ENCODE measurements at regions of chr3 and their contacts with region 1.

Region 1: GRCh38 chr3:42071904-42072592 is 19.1 kb upstream of the TRAK1 start:
- DNase-seq: peak; percentile 98
- H3K4me3 ChIP-seq: peak overlapping the region in 1 of 3 experiments; percentile 20
- H3K27ac ChIP-seq: peak overlapping the region; percentile 67
- H3K4me1 ChIP-seq: peaks cover 26% of the 10 kb centered on the region
- H3K27me3 ChIP-seq: no peaks in the 10 kb centered on the region
- CTCF ChIP-seq: no peak
- POLR2A ChIP-seq: no peak

Region 2: GRCh38 chr3:42025370-42026138 is 46.5 kb before region 1 on chr3:
- CTCF ChIA-PET with region 1: interaction called, 14 read pairs
- POLR2A ChIA-PET with region 1: interaction called, 8 read pairs
- dilution Hi-C with region 1: no loop called
- intact Hi-C with region 1: loop called (anchors 1 kb)
- DNase-seq: peak; percentile 98
- H3K4me3 ChIP-seq: peak overlapping the region in 1 of 3 experiments; percentile 46
- H3K27ac ChIP-seq: peak overlapping the region; percentile 93
- H3K4me1 ChIP-seq: peaks cover 40% of the 10 kb centered on the region
- H3K27me3 ChIP-seq: no peaks in the 10 kb centered on the region
- CTCF ChIP-seq: no peak
- POLR2A ChIP-seq: peak; percentile 18

Region 3: DNA sequence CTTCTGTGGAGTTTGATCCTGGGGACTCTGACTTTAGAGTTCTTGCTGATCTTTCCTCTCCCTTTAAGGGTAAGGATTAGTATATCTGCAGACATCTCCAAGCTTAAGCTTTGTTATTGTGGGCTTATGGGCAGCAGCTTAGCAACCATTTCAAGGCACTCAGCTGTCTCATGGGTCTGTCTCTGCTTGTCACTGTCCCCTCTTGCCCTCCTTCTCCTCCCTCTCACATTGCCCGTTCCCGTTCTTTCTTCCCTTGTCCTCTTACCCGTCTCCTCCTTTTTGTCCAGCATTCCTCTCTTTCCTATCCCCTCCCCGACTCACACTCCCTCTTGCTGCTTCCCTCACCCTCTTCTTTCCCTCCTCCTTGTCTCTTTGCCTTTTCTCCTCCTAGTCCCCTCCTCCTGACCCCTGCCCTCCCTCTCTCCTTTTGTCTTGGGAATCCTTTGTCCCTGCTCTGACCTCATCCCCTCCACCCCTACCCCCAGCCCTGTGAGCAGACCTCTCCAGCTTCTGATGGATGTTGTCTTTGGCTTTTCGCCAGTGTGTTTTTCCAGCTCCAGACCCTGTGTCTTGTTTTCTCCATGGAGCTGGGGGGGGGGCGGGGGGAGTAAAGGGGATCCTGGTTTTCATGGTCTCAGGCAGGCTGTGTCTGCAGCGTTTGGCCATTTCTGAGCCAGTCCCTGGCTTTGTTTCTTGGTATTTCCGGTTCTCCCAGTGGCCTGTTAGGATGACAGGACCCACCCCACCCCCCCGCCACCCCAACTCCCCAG is 28.8 kb before region 1 on chr3:
- CTCF ChIA-PET with region 1: interaction called, 8 read pairs
- POLR2A ChIA-PET with region 1: interaction called, 8 read pairs
- dilution Hi-C with region 1: no loop called
- intact Hi-C with region 1: loop called (anchors 1 kb)
- DNase-seq: peak; percentile 98
- H3K4me3 ChIP-seq: no peak overlapping the region
- H3K27ac ChIP-seq: peak overlapping the region; percentile 91
- H3K4me1 ChIP-seq: peaks cover 35% of the 10 kb centered on the region
- H3K27me3 ChIP-seq: no peaks in the 10 kb centered on the region
- CTCF ChIP-seq: no peak
- POLR2A ChIP-seq: peak; percentile 32

Region 4: DNA sequence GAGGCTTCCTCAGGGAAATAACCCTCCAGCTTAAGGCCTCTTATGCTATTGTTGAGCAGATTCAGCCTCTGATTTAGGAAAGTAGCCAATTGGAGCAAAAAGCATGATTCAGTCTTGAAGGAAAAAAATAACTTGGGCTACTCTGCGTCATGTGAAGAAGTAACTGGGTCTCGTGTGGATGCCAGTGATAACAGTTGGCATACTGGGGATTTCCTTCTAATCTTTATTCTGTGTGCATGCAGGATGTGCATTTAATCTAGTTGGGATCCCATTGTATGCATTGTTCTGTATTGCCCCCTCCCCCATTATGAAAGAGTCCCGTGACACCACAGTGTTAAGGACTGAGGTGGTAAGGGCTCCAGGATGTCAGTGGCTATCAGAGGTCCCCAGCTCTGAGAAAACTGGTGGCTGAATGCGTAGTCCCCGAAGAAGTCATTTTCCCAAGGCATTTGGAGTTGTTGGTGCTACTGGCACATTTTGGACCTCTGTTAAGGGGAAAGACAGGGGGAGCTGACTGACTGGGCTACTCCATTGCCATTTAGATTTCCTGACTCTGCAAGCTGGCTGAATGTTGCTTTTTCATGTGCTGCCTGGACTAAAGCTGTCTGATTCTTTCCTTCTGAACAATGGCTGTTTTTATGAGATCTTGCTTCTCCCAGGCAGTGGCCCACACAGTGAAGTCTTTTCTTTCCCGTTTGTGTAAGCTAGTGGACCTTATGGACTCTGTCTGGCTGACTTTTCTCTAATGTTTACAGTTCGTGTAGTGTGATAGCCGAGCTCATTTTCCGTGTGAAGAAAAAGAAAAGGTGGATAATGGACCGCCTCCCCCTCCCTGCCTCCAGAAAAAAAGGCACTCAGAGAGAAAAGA is 19.3 kb before region 1 on chr3:
- CTCF ChIA-PET with region 1: interaction called, 7 read pairs
- POLR2A ChIA-PET with region 1: interaction called, 9 read pairs
- dilution Hi-C with region 1: no loop called
- intact Hi-C with region 1: loop called (anchors 1 kb)
- DNase-seq: peak; percentile 97
- H3K4me3 ChIP-seq: peak overlapping the region in 1 of 3 experiments; percentile 9
- H3K27ac ChIP-seq: peak overlapping the region; percentile 93
- H3K4me1 ChIP-seq: peaks cover 23% of the 10 kb centered on the region
- H3K27me3 ChIP-seq: no peaks in the 10 kb centered on the region
- CTCF ChIP-seq: no peak
- POLR2A ChIP-seq: no peak

Region 5: GRCh38 chr3:42061713-42062408 is 10.2 kb before region 1 on chr3:
- CTCF ChIA-PET with region 1: interaction called, 12 read pairs
- POLR2A ChIA-PET with region 1: no interaction called
- dilution Hi-C with region 1: no loop called
- intact Hi-C with region 1: loop called (anchors 1 kb)
- DNase-seq: peak; percentile 90
- H3K4me3 ChIP-seq: no peak overlapping the region
- H3K27ac ChIP-seq: peak overlapping the region; percentile 80
- H3K4me1 ChIP-seq: peaks cover 36% of the 10 kb centered on the region
- H3K27me3 ChIP-seq: no peaks in the 10 kb centered on the region
- CTCF ChIP-seq: no peak
- POLR2A ChIP-seq: no peak

Region 6: DNA sequence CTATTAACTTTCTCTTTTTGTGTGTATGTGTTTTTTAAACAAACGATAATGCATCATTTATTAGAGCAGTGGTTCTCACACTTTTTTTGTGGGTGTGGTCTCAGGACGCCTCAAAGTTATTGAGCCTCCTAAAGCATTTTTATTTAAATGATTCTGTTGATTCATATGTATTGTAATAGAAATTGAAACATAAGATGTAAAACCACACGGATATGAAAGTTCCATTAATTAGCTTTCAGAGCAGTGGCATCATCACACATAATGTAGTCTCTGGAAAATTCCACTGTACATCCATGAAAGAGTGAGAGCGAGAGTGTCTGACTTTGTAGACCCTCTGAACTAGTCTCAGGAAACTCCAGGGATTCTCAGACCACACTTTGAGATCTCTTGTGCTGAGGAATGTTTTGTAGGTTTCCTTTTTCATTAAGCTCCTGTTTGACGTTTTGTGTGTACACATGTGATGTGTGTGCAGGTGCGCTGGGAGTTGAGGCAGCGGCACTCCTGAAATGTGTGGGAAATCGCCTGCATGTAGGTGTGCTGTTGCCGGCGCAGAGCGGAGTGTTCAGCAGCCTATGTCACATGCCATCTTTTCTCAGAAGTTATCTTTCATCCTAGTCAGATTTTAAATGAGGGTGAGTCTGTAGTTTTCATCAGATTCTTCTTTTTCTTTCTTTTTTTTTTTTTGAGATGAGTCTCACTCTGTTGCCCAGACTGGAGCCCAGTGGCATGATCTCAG is 13.8 kb after region 1 on chr3:
- CTCF ChIA-PET with region 1: interaction called, 7 read pairs
- POLR2A ChIA-PET with region 1: no interaction called
- dilution Hi-C with region 1: no loop called
- intact Hi-C with region 1: loop called (anchors 2 kb)
- DNase-seq: no peak
- H3K4me3 ChIP-seq: no peak overlapping the region
- H3K27ac ChIP-seq: no peak overlapping the region
- H3K4me1 ChIP-seq: peaks cover 3% of the 10 kb centered on the region
- H3K27me3 ChIP-seq: no peaks in the 10 kb centered on the region
- CTCF ChIP-seq: no peak
- POLR2A ChIP-seq: no peak

Measured in endothelial cell of umbilical vein (primary cell).